ENCODE measurements at regions of chr20 and their contacts with region 1.

Region 1: GRCh38 chr20:62302341-62303058 is at the start of gene ADRM1:
- DNase-seq: peak; percentile 98
- ATAC-seq: peak; percentile 95
- total RNA-seq, gene ADRM1: 73.9 TPM

Region 2: GRCh38 chr20:62344782-62345181 is 42.3 kb after region 1 on chr20:
- intact Hi-C with region 1: loop called (anchors 5 kb)
- DNase-seq: peak; percentile 23
- ATAC-seq: no peak

Region 3: DNA sequence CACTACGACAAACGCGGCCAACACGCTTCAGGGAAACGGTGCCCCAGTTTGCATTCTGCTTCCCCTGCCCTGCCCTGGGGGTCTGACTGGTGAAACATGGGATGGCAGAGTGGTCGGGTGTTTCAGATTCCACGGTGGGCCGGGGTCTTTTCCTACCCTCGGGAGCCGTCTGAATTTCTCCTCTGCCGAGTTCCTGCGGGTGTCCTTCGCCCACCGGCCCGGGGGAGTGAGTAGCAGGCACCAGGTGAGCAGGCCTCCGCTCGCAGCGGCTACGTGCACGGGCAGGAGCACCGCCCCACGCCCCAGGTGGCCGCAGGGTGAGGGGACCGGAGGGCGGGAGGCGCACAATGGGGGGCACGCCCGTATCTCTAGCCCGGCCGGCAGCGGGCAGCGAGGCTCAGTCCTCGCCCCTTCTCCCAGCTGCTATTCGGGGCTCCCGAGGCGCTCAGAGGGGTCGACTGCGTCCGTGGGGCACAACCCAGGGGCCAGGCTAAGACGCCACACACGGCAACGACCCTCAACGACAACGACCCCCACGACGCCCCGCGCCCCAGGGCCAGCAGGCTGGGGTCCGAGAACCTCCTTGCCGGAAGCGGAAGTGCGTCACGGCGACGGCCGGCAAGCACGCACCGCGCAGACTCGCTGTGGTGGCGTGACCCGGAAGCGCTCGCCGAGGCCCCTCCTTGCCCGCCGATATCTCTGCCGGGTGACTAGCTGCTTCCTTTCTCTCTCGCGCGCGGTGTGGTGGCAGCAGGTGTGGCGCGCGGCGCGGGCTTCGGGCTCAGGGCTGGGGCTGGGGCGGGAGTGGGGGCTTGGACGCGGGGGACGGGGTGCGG is 84.1 kb after region 1 on chr20 and contains the start of gene RPS21:
- intact Hi-C with region 1: loop called (anchors 1 kb)
- DNase-seq: peak; percentile 97
- ATAC-seq: peak; percentile 93
- total RNA-seq, gene RPS21: 782 TPM

Region 4: DNA sequence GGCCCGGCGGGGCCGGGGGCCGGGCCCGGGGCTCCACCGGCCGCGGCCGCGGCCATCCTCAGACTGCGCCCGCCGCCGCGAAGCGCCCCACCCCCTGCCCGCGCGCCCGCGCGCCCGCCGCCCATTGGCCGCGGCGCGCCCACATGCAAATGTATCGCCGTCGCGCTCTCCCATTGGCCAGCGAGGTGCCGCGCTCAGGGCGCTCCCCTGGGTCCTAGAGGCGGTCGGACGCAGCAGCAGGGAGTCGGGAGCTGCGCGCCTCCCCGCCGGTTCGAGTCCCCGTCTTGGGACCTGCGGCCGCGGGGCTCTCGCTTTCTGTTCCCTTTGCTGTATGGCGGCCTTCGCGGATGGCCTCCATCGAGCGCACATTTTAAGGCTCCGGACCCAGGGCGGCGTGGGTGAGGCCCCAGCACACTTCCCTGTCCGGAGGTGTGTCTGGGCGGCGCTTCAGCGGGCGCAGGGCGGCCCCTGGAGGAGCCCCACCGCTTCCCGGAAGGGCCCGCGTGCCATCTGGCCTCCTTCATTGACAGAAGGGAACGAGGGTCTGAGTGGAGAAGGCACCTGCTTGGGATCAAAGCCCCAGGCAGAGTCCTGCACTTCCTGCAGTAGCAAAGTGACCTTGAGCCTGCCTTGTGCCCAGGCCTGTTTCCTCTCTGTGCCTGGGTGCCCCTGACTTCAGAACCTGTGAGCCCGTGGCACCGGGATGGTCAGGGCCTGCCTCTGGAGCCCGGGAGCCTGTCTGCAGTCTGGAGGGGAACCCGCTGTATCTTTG is 104.9 kb after region 1 on chr20 and contains the start of gene CABLES2:
- intact Hi-C with region 1: loop called (anchors 1 kb)
- DNase-seq: peak; percentile 98
- ATAC-seq: peak; percentile 93
- total RNA-seq, gene CABLES2: 18.1 TPM

Region 5: DNA sequence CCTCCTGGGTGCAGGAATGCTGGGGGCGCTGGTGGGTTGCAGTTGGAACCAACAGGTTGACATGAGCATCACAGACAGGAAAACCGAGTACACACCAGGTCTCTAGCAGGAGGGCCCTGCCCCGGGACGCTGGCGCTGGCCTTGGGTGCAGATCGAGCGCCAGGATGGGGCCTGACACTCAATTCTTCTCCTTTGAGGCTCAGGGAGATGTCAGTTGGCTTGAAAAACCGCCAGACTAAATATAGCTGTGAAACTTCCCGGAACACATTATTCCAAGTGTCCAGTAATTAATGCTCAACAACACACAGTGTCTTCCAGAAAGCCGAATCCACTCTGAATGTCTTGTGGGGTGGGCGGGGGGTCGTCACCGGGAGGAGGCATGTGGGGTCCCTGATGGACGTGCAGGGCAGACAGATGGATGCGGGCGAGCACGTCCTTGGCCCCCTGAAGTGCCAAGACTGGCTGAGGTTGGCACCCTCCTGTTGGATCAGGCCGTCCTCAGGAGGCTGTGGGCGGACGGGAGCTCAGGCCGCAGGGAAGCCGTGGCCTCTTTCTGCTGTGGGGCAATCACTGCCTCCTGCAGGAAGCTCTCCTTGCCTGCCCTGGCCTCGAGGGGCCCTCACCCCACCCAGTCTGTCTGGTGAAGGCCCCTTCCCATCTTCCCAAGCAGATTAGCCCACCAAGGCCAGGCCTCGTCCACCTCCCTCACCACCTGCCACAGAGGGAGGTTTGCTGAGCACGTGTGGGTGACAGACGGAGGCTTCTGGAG is 192.7 kb after region 1 on chr20:
- intact Hi-C with region 1: loop called (anchors 5 kb)
- DNase-seq: no peak
- ATAC-seq: peak; percentile 37

Region 6: GRCh38 chr20:62793912-62794724 is 491.6 kb after region 1 on chr20:
- intact Hi-C with region 1: loop called (anchors 10 kb)
- DNase-seq: peak; percentile 99
- ATAC-seq: peak; percentile 94